Activated CD4-positive, alpha-beta T cell treated with anti-CD3 and anti-CD28 coated beads, Interleukin-2, amount 10 ng/mL, durations not matched to agents 24 days and 14 days (primary cell): ENCODE measurements at regions of chr6 and their contacts with region 1.

Region 1: DNA sequence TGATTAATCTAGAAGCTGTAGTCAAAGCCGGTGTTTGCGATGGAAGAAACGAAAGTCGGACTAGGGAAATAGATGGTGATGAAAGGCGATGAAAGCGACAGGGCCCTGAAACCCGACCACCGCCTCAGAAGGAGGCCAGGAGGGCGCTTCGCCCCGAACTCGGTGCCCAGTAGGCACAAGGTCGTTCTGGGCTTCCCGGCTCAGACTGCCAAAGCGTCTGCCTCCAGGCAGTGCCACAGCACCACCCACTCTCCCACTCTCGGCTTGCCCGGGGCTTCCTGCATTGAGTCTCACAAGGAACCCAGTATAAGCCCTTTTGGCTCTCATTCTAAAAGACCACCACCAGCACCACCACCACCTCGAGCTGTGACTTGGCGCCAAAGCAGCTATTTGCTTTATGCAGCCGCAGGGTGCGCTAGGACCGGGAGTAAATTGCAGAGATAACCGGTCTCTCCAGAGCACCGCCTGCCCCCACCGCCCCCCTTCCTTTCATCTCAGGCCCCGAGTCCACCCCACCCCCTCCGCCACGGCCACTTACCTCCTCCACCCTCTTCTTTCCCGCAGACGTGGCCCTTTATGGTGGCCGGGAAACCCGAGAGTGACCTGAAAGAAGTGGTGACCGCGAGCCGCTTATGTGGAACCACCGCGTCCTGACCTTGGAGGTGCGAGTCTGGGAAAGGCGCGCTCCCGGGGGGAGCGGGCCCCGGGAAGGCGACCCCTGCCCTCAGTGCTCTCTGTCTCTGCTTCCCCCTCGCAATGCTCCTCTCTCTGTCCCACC is 2.4 kb downstream of the TCF21 start:
- DNase-seq: peak; percentile 68
- H3K4me3 Mint-ChIP-seq: peak overlapping the region; percentile 76
- H3K27ac Mint-ChIP-seq: no peak overlapping the region
- H3K4me1 Mint-ChIP-seq: peaks cover 28% of the 10 kb centered on the region
- H3K27me3 Mint-ChIP-seq: peaks cover 91% of the 10 kb centered on the region

Region 2: DNA sequence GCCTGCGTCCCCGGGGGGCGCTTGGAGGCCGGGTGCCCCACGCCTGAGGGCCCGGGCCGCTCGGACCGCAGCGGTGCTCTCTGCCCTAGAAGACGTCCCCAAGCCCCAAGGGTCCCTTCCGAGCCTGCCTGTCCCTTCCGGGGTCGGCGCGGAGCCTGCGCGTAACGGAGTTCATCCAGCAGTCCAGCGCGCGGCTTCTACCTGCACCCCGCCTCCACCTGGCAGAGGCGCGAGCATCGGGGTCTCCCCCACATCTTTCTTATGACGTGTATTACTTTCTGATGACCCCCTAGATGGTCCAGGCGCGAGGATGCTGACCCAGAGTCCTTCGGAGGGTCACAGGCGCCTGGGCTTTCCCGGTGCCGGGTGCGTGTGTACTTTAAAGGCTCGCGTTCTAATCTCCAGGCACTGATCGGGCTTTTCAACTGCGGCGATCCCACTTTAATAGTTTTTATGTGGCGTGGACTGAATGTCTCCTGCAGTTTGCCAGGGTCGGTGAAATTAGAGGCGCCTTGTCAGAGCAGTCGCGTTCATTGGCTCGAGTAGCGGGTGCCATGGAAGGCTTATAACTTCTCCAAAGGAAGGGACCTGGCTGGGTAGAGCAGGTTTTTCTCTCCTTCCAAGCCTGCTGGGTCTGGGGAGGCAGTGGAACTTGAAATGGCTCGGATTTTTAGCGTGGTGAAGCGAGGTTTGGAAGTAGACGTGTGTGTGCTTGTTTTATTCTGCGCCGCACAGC is 649.3 kb before region 1 on chr6:
- intact Hi-C with region 1: loop called (anchors 2 kb)
- DNase-seq: no peak
- H3K4me3 Mint-ChIP-seq: no peak overlapping the region
- H3K27ac Mint-ChIP-seq: no peak overlapping the region
- H3K4me1 Mint-ChIP-seq: peaks cover 3% of the 10 kb centered on the region
- H3K27me3 Mint-ChIP-seq: peaks cover 57% of the 10 kb centered on the region

Region 3: GRCh38 chr6:133854364-133855275 is 36.7 kb before region 1 on chr6:
- intact Hi-C with region 1: loop called (anchors 2 kb)
- DNase-seq: no peak
- H3K4me3 Mint-ChIP-seq: no peak overlapping the region
- H3K27ac Mint-ChIP-seq: no peak overlapping the region
- H3K4me1 Mint-ChIP-seq: peaks cover 3% of the 10 kb centered on the region
- H3K27me3 Mint-ChIP-seq: peaks cover 62% of the 10 kb centered on the region